ENCODE measurements at regions of chr11 and their contacts with region 1.

Region 1: GRCh38 chr11:62427630-62428233 is 8.9 kb downstream of the SCGB1A1 start:
- DNase-seq: peak in 1 of 5 donors; percentile 8
- H3K4me3 ChIP-seq: no peak overlapping the region
- H3K4me3 Mint-ChIP-seq: peak overlapping the region in 6 of 7 donors; percentile 2 to 81 (median 17)
- H3K27ac ChIP-seq: peak overlapping the region; percentile 10
- H3K27ac Mint-ChIP-seq: peak overlapping the region; percentile 52 to 97 (median 76)
- H3K4me1 ChIP-seq: peaks cover 21% of the 10 kb centered on the region
- H3K4me1 Mint-ChIP-seq: peaks cover 50 to 56% (median 50%) of the 10 kb centered on the region in 3 donors
- H3K27me3 ChIP-seq: no peaks in the 10 kb centered on the region
- H3K27me3 Mint-ChIP-seq: no peaks in the 10 kb centered on the region

Region 2: DNA sequence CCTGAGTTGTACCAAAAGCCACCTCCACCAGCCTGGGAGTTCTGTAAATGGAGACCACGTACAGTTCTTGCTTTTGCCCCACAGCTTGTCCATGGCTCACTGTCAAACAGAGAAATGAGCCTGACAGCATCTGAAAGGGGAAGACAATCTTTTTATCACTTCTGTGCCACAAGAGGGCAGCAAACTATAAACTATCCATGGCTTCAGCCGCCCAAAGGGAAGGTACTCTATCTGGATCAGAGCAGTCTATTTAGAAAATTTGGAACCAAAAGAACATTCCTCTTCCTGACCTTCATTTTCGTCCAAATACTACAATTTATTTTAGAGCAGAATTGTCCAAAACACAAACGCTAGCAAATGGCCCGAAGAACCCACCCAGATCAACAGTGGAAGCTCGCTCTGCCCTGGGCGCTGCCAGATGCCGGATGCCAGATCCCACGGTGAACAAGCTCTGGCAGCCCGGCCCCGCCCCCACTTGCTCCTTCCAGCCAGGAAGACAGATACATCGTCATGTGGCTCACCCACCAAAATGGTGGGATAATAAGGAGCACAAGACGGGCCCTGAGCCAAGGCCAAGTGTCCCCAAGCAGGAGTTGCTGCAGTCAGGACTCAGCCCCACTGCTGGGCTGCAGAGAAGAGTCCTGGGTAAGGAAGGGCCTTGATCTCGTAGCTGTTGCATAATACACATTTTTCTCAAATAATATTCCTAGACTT is 32.8 kb before region 1 on chr11:
- CTCF ChIA-PET with region 1: interaction called, 26 read pairs
- POLR2A ChIA-PET with region 1: no interaction called
- DNase-seq: peak; percentile 22 to 62 (median 52)
- H3K4me3 ChIP-seq: no peak overlapping the region
- H3K4me3 Mint-ChIP-seq: no peak overlapping the region
- H3K27ac ChIP-seq: no peak overlapping the region
- H3K27ac Mint-ChIP-seq: no peak overlapping the region
- H3K4me1 ChIP-seq: peaks cover 19% of the 10 kb centered on the region
- H3K4me1 Mint-ChIP-seq: peaks cover 10 to 20% (median 16%) of the 10 kb centered on the region in 3 donors
- H3K27me3 ChIP-seq: no peaks in the 10 kb centered on the region
- H3K27me3 Mint-ChIP-seq: peaks cover 0 to 2% of the 10 kb centered on the region in 2 donors

Region 3: DNA sequence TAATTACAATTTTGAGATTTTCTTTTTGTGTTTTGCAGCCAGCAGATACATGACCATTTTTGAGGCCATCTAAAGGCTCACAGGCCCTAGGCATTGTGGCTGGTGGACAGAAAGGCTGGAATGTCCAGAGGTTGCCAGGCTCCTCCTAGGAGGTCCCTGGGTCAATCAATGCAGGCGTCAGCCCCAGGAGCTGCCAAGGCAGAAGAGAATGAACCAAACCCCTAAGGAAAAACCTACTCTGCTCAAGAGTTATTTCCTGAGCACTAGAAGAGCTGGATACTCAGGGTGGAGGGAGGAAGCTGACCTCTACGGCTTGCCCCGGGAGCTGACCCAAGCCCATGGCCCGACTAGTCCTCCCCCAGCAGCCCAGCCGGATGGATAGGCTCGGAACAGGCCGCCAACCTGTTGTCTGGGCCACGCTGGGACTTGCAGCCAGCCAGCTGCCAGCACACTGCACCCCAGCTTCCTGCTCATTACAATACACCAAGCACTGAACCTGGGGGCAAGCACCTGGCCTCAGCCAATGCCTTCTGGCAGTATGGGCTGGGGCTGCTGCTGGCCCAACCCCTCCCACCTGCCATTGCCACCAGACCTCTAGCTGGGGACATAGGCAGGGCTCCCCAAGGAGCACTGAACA is 14.6 kb before region 1 on chr11:
- CTCF ChIA-PET with region 1: interaction called, 10 read pairs
- POLR2A ChIA-PET with region 1: no interaction called
- DNase-seq: no peak
- H3K4me3 ChIP-seq: no peak overlapping the region
- H3K4me3 Mint-ChIP-seq: no peak overlapping the region
- H3K27ac ChIP-seq: no peak overlapping the region
- H3K27ac Mint-ChIP-seq: peak overlapping the region in 1 of 8 donors; percentile 95
- H3K4me1 ChIP-seq: no peaks in the 10 kb centered on the region
- H3K4me1 Mint-ChIP-seq: no peaks in the 10 kb centered on the region
- H3K27me3 ChIP-seq: no peaks in the 10 kb centered on the region
- H3K27me3 Mint-ChIP-seq: no peaks in the 10 kb centered on the region

Region 4: DNA sequence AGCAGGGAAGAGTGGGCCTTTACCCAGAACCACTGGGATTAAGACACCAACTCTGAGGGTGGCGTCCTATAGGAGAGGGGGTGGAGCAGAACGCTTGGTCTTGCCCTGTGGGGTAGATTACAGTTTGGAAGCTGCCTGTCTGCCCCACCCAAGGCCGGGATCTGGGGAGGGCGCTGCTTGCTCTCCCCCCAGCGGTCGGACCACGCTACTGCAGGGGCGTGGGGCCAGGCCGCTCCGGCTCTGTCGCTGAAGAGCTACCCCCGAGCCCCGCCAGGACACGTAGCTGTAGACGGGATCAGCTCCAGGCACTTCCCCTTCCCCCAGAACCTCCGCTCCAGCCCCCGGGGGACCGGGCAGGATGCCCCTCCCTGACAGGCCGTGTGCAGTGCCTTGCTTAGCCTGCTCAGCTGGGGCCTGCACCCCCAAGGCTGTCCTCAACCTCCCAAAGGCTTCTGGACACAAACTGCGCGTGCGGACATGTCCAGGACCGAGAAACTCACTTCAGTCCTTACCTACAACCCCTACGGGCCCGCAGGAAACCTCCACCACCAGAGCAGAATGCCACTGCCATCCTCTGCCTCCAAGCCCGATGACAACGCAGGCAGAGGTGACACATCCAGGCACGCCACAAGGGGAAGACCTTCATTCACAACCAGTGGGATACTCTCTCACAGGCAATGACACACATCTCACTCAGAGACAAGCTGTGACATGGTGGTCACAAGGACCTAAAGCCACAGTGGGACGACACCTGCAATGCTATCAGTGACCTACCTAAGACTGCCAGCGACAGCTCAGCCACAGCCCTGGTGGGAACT is 115.2 kb after region 1 on chr11:
- CTCF ChIA-PET with region 1: interaction called, 88 read pairs
- POLR2A ChIA-PET with region 1: interaction called, 11 read pairs
- DNase-seq: peak; percentile 61 to 86 (median 70)
- H3K4me3 ChIP-seq: peak overlapping the region; percentile 76
- H3K4me3 Mint-ChIP-seq: peak overlapping the region; percentile 92 to 99 (median 98)
- H3K27ac ChIP-seq: peak overlapping the region; percentile 96
- H3K27ac Mint-ChIP-seq: peak overlapping the region; percentile 92 to 100 (median 97)
- H3K4me1 ChIP-seq: peaks cover 72% of the 10 kb centered on the region
- H3K4me1 Mint-ChIP-seq: peaks cover 66 to 83% (median 74%) of the 10 kb centered on the region in 3 donors
- H3K27me3 ChIP-seq: no peaks in the 10 kb centered on the region
- H3K27me3 Mint-ChIP-seq: peaks cover 0 to 3% of the 10 kb centered on the region in 2 donors

Region 5: DNA sequence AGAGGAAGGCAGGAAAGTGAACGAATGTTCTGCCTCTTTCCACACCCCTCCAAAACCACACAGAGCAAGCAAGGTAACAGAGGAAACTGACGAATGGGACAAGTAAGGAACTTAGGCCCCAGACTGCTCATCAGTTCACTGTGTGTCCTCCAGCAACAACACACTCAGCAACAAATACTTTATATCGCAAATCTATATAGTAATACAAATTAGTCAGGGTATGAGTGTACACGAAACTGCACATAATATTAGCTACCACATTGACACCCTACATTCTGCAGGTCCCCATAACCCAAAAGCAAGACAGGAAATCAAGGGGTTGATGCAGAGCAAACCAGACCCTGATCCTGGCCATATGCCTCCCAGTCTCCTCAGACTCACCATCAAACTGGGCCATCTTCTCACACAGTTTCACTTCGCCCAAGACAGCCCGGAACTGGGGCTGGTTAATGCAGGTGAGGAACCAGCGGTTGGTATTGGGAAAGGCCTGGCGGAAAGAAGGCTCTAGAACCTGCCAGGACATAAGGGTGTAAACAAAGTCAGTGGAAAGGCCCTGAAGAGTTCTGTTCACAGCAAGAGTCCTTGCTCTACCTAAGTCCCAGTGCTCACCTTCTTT is 139.4 kb after region 1 on chr11:
- CTCF ChIA-PET with region 1: interaction called, 135 read pairs
- POLR2A ChIA-PET with region 1: interaction called, 3 read pairs
- DNase-seq: no peak
- H3K4me3 ChIP-seq: no peak overlapping the region
- H3K4me3 Mint-ChIP-seq: peak overlapping the region in 3 of 7 donors; percentile 2 to 10 (median 5)
- H3K27ac ChIP-seq: no peak overlapping the region
- H3K27ac Mint-ChIP-seq: peak overlapping the region; percentile 3 to 90 (median 80)
- H3K4me1 ChIP-seq: peaks cover 8% of the 10 kb centered on the region
- H3K4me1 Mint-ChIP-seq: peaks cover 32 to 54% (median 53%) of the 10 kb centered on the region in 3 donors
- H3K27me3 ChIP-seq: no peaks in the 10 kb centered on the region
- H3K27me3 Mint-ChIP-seq: no peaks in the 10 kb centered on the region

Region 6: DNA sequence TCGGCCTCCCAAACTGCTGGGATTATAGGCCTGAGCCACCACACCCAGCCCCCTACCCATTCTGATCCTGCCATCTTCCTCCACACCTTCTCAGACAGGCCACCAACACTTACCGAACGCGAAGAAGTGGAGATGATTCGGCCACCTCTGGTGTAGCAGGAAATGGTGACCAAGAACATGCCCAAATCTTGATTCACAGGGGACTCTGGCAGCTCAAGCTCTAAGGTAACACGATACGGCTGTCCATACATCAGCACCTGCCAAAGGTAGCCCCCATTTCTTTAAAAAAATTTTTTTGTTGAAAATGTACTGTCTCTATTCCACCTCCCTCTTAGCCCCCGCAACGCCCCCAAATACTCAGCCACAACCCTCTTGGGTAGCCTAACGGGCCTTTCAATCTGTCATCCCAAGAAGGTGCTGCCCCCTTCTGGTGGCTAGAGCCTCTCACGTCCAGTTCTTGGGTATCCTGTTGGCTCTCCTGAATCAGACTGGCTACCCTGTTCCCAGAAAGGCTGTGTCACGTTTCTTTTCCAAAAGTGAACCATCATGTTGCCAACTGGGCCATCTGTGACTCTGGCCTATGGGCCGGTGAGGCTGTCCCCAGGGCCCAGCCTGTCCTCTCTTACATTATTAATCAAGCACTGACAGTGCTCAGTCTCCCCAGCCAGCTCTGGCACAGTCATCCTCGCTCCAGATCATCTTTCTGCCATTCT is 266.9 kb after region 1 on chr11:
- CTCF ChIA-PET with region 1: interaction called, 11 read pairs
- POLR2A ChIA-PET with region 1: no interaction called
- DNase-seq: peak; percentile 68 to 84 (median 72)
- H3K4me3 ChIP-seq: no peak overlapping the region
- H3K4me3 Mint-ChIP-seq: no peak overlapping the region
- H3K27ac ChIP-seq: no peak overlapping the region
- H3K27ac Mint-ChIP-seq: peak overlapping the region in 5 of 8 donors; percentile 5 to 81 (median 48)
- H3K4me1 ChIP-seq: peaks cover 7% of the 10 kb centered on the region
- H3K4me1 Mint-ChIP-seq: peaks cover 5 to 8% (median 6%) of the 10 kb centered on the region in 3 donors
- H3K27me3 ChIP-seq: no peaks in the 10 kb centered on the region
- H3K27me3 Mint-ChIP-seq: peaks cover 0 to 2% of the 10 kb centered on the region in 2 donors

Region 7: GRCh38 chr11:62888406-62888805 is 460.7 kb after region 1 on chr11:
- CTCF ChIA-PET with region 1: no interaction called
- POLR2A ChIA-PET with region 1: no interaction called
- DNase-seq: no peak
- H3K4me3 ChIP-seq: no peak overlapping the region
- H3K4me3 Mint-ChIP-seq: no peak overlapping the region
- H3K27ac ChIP-seq: no peak overlapping the region
- H3K27ac Mint-ChIP-seq: peak overlapping the region in 1 of 8 donors; percentile 58
- H3K4me1 ChIP-seq: peaks cover 11% of the 10 kb centered on the region
- H3K4me1 Mint-ChIP-seq: peaks cover 20 to 23% (median 20%) of the 10 kb centered on the region in 3 donors
- H3K27me3 ChIP-seq: no peaks in the 10 kb centered on the region
- H3K27me3 Mint-ChIP-seq: no peaks in the 10 kb centered on the region